IMR-90 (cell line): ENCODE measurements at regions of chr10 and their contacts with region 1.

Region 1: GRCh38 chr10:91758303-91759146 is 39.7 kb upstream of the TNKS2 start:
- DNase-seq: peak; percentile 75
- ATAC-seq: peak; percentile 65
- H3K4me3 ChIP-seq: no peak overlapping the region
- H3K27ac ChIP-seq: no peak overlapping the region
- H3K4me1 ChIP-seq: peaks cover 8% of the 10 kb centered on the region
- H3K27me3 ChIP-seq: no peaks in the 10 kb centered on the region; the same call in 1 of the 2 replicates
- CTCF ChIP-seq: peak; percentile 64
- POLR2A ChIP-seq: no peak
- RAD21 ChIP-seq: peak; percentile 74

Region 2: GRCh38 chr10:91409869-91410637 is 348.5 kb before region 1 on chr10 and contains the start of gene HECTD2:
- CTCF ChIA-PET with region 1: no interaction called
- POLR2A ChIA-PET with region 1: no interaction called
- dilution Hi-C with region 1: no loop called
- in situ Hi-C with region 1: no loop called
- intact Hi-C with region 1: loop called (anchors 5 kb)
- DNase-seq: peak; percentile 65
- ATAC-seq: peak; percentile 80
- H3K4me3 ChIP-seq: peak within 1 kb of the TSS; percentile 83
- H3K27ac ChIP-seq: peak within 1 kb of the TSS; percentile 98
- H3K4me1 ChIP-seq: no peaks in the 10 kb centered on the region
- H3K27me3 ChIP-seq: no peaks in the 10 kb centered on the region
- CTCF ChIP-seq: peak; percentile 57
- POLR2A ChIP-seq: peak; percentile 64; the same call in 1 of the 2 replicates
- RAD21 ChIP-seq: peak; percentile 27
- total RNA-seq, gene HECTD2: 5.9 and 10.3 TPM in 2 replicates

Region 3: DNA sequence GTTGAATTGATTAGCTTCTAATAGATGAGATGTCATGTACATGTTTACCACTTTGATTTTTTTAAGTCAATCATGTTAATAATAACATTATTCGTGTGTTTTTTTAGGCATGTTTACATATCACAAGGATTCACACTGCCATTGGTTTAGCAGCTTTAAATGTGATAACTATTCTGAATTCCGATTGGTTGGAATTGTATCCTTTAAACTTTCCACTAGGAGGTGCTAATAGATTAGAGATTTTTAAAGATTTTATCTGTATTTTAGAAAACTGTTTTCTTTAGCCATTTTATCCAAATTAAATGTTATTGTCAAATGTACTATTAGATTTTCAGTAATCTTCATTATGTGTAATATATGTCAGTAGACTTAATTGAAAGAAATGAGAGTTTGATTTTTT is 265.2 kb before region 1 on chr10:
- CTCF ChIA-PET with region 1: no interaction called
- POLR2A ChIA-PET with region 1: no interaction called
- dilution Hi-C with region 1: no loop called
- in situ Hi-C with region 1: no loop called
- intact Hi-C with region 1: loop called (anchors 5 kb)
- DNase-seq: peak; percentile 63
- ATAC-seq: no peak
- H3K4me3 ChIP-seq: no peak overlapping the region
- H3K27ac ChIP-seq: no peak overlapping the region
- H3K4me1 ChIP-seq: peaks cover 3% of the 10 kb centered on the region; the same call in 1 of the 2 replicates
- H3K27me3 ChIP-seq: no peaks in the 10 kb centered on the region
- CTCF ChIP-seq: peak; percentile 57
- POLR2A ChIP-seq: no peak
- RAD21 ChIP-seq: peak; percentile 54

Region 4: DNA sequence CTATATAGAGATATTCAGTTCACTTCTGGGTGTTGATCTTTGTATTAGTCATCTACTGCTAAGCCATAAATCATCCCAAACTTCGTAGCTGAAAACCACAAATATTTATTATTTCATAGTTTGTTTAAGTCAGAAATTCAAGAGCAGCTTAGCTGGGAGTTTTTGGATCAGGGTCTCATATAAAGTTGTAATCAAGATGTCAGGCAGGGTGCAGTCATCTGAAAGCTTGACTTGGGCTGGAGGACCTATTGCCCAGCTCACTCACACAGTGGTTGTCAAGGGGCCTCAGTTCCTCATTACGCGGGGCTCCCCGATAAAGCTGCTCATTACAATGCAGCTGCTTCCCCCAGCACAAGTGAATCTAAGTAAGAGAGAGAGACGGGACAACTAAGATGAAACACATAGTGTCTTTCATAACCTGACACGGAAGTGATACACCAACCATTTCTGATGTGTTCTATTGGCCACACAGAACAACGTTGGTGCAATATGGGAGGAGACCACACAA is 141.4 kb before region 1 on chr10:
- CTCF ChIA-PET with region 1: no interaction called
- POLR2A ChIA-PET with region 1: no interaction called
- dilution Hi-C with region 1: no loop called
- in situ Hi-C with region 1: no loop called
- intact Hi-C with region 1: no loop called
- DNase-seq: peak; percentile 94
- ATAC-seq: peak; percentile 13
- H3K4me3 ChIP-seq: no peak overlapping the region
- H3K27ac ChIP-seq: peak overlapping the region; percentile 61
- H3K4me1 ChIP-seq: peaks cover 8% of the 10 kb centered on the region
- H3K27me3 ChIP-seq: no peaks in the 10 kb centered on the region
- CTCF ChIP-seq: no peak
- POLR2A ChIP-seq: no peak
- RAD21 ChIP-seq: no peak

Region 5: GRCh38 chr10:91672021-91672608 is 86.4 kb before region 1 on chr10:
- CTCF ChIA-PET with region 1: no interaction called
- POLR2A ChIA-PET with region 1: no interaction called
- dilution Hi-C with region 1: no loop called
- in situ Hi-C with region 1: no loop called
- intact Hi-C with region 1: no loop called
- DNase-seq: peak; percentile 82
- ATAC-seq: peak; percentile 96
- H3K4me3 ChIP-seq: peak overlapping the region; percentile 2; the same call in 1 of the 2 replicates
- H3K27ac ChIP-seq: peak overlapping the region; percentile 10; the same call in 1 of the 2 replicates
- H3K4me1 ChIP-seq: peaks cover 7% of the 10 kb centered on the region
- H3K27me3 ChIP-seq: no peaks in the 10 kb centered on the region
- CTCF ChIP-seq: no peak
- POLR2A ChIP-seq: no peak
- RAD21 ChIP-seq: no peak

Region 6: DNA sequence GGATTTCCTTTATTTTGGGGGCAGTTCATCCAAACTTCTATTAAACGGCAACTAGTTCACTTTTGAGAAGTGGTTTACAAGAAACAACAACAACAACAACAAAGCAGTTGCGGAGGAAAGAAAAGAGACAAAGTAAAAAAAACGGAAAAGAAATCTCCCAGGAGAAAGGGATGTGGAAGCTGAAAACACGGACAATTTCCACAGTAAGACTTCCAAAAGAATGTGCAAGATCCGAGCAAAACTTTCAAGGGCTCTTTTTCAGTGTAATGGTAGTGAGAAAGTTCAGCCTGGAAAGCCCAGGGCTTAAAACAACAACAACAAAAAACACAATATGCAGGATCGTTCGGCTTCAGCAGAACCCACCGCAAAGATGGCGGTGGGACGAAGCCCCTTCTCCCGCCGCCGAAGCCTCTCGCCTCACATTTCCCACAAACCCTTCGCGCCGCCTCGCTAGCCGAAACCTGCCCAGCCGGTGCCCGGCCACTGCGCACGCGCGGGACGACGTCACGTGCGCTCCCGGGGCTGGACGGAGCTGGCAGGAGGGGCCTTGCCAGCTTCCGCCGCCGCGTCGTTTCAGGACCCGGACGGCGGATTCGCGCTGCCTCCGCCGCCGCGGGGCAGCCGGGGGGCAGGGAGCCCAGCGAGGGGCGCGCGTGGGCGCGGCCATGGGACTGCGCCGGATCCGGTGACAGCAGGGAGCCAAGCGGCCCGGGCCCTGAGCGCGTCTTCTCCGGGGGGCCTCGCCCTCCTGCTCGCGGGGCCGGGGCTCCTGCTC is 39.5 kb after region 1 on chr10 and contains the start of gene TNKS2:
- CTCF ChIA-PET with region 1: no interaction called
- POLR2A ChIA-PET with region 1: no interaction called
- dilution Hi-C with region 1: no loop called
- in situ Hi-C with region 1: no loop called
- intact Hi-C with region 1: loop called (anchors 5 kb)
- DNase-seq: peak; percentile 91
- ATAC-seq: peak; percentile 94
- H3K4me3 ChIP-seq: peak within 1 kb of the TSS; percentile 92
- H3K27ac ChIP-seq: peak within 1 kb of the TSS; percentile 95
- H3K4me1 ChIP-seq: 0 out of 2 replicates have a peak, but pooled peaks cover 2% of the 10 kb centered on the region
- H3K27me3 ChIP-seq: no peaks in the 10 kb centered on the region
- CTCF ChIP-seq: no peak
- POLR2A ChIP-seq: peak; percentile 86
- RAD21 ChIP-seq: no peak
- total RNA-seq, gene TNKS2: 41.4 and 49.4 TPM in 2 replicates